ENCODE measurements at regions of chr17 and their contacts with region 1.

Region 1: GRCh38 chr17:1447052-1447451 is 9.0 kb downstream of the CRK start:
- DNase-seq: no peak
- H3K4me3 ChIP-seq: no peak overlapping the region
- H3K27ac ChIP-seq: peak overlapping the region in 3 of 4 donors; percentile 7 to 24 (median 9)
- H3K4me1 ChIP-seq: peaks cover 0 to 45% (median 25%) of the 10 kb centered on the region in 4 donors
- H3K27me3 ChIP-seq: no peaks in the 10 kb centered on the region
- CTCF ChIP-seq: no peak
- EP300 ChIP-seq: no peak
- POLR2A ChIP-seq: no peak

Region 2: GRCh38 chr17:1275962-1276736 is 170.9 kb before region 1 on chr17:
- in situ Hi-C with region 1: no loop called
- intact Hi-C with region 1: loop called (anchors 10 kb)
- DNase-seq: peak; percentile 71
- H3K4me3 ChIP-seq: no peak overlapping the region
- H3K27ac ChIP-seq: no peak overlapping the region
- H3K4me1 ChIP-seq: no peaks in the 10 kb centered on the region
- H3K27me3 ChIP-seq: peaks cover 63% of the 10 kb centered on the region
- CTCF ChIP-seq: peak; percentile 63 to 91 (median 82)
- EP300 ChIP-seq: no peak
- POLR2A ChIP-seq: no peak

Region 3: DNA sequence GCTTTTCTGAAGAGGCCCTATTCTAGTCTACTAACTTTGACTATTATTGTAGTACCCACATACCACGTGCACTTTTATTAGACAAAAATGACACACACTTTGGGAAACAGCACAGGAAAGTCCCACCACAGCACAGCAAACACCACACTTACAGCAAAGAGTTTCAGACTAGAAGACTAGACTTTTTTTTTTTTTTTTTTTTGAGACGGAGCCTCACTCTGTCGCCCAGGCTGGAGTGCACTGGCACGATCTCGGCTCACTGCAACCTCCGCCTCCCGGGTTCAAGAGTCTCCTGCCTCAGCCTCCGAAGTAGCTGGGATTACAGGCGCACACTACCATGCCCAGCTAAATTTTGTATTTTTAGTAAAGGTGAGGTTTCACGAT is 67.1 kb before region 1 on chr17:
- in situ Hi-C with region 1: loop called in 1 of 4 experiments (anchors 10 kb)
- intact Hi-C with region 1: no loop called
- DNase-seq: no peak
- H3K4me3 ChIP-seq: no peak overlapping the region
- H3K27ac ChIP-seq: peak overlapping the region; percentile 20 to 80 (median 58)
- H3K4me1 ChIP-seq: peaks cover 61 to 97% (median 84%) of the 10 kb centered on the region in 4 donors
- H3K27me3 ChIP-seq: no peaks in the 10 kb centered on the region
- CTCF ChIP-seq: no peak
- EP300 ChIP-seq: no peak
- POLR2A ChIP-seq: no peak

Region 4: DNA sequence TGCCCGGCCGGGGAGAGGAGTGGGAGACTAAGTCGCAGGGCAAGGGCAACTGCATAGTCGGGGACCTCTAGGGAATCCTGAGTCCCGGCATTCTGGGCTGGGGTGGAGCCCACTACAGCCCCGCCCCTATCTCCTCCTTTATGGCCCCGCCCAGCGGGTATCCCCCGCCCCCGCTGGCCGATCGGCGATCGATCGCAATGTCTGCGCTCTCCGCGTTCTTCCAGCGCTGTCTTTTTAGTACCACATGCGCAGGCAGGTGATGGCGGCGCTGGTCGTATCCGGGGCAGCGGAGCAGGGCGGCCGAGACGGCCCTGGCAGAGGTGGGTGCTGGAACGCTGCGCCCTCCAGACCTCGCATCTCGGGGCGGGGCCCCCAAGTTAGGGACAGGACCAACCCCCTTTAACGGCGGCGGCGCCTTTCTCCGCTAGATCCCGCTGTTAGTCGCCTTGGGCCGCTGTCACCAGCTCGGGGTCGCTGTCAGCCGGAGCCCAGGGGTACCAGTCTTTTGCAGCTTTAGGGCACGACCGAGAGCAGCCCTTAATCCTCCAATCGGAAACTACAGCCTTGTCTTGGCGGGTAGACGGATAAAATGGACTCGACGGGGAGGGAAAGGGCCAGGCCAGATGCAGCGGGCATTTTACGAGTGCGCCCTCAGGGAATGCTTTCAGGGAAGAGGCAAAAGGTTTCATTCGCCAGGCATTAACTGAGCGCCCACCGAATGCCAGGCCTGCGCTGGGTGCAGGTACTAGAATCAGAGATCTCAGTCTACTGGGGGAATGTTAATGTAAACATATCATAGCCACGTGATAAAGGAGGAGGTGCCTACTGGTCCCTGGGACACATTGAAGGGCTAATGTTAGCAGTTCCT is 583.1 kb after region 1 on chr17 and contains the start of gene DPH1:
- in situ Hi-C with region 1: no loop called
- intact Hi-C with region 1: no loop called
- DNase-seq: peak; percentile 89
- H3K4me3 ChIP-seq: peak within 1 kb of the TSS; percentile 71 to 91 (median 82)
- H3K27ac ChIP-seq: peak within 1 kb of the TSS; percentile 62 to 86 (median 76)
- H3K4me1 ChIP-seq: peaks cover 15 to 32% (median 23%) of the 10 kb centered on the region in 4 donors
- H3K27me3 ChIP-seq: peaks cover 43% of the 10 kb centered on the region
- CTCF ChIP-seq: no peak
- EP300 ChIP-seq: no peak
- POLR2A ChIP-seq: no peak
- total RNA-seq, gene DPH1: 32.4 to 88.8 (median 58.9) TPM

Measured in transverse colon (tissue), 4 donors.